ENCODE measurements at regions of chr2 and their contacts with region 1.

Region 1: DNA sequence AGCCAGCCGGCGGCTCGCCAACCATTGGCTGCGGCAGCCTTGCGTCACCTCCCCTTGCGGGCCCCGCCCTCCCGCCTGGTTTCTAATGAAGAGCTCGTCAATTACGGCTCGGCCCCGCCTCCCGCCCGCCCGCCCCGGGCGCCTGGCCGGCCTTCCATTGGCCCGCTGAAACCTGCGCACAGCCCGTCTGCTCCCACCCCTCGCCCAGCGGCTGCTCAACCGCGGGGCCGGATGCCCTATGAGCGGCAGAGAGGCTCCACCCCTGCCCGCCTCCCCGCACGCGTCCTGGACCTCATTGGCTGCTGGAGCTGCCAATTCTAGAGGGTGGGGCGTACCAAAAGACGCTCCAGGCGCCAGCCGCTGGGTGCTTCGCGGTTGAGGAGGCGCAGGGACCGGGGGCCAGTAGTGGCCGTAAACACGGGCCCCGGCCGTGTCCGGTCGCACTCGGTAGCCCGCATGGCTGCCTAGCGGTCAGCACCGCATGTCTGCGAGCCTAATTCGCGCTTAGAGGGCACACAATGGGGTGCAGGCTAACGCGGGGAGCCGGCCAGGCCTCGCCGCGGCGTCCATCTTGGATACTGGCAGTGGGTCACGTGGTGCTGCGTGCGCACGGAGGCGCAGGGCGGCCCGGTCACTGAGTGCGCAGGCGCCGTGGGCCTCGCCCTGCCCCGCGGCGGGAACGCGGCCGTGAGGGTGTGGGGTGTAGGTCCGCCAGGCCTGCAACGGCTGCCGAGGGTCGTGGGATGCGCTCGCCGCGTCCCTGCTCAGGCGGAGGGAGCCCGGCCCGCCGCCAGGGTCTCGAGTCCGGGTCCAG is 454 bp upstream of the HDAC4 start:
- DNase-seq: peak; percentile 99 to 100 (median 99)
- ATAC-seq: peak; percentile 86 to 88
- H3K4me3 Mint-ChIP-seq: peak overlapping the region; percentile 85 to 96 (median 92)
- H3K27ac Mint-ChIP-seq: peak overlapping the region; percentile 92 to 99 (median 98)
- H3K4me1 Mint-ChIP-seq: peaks cover 24 to 46% (median 43%) of the 10 kb centered on the region in 4 donors
- H3K27me3 Mint-ChIP-seq: peaks cover 0 to 1% (median 0%) of the 10 kb centered on the region in 5 donors

Region 2: GRCh38 chr2:239267288-239267951 is 133.9 kb before region 1 on chr2:
- POLR2A ChIA-PET with region 1: interaction called, 16 read pairs
- DNase-seq: peak; percentile 74 to 97 (median 94)
- ATAC-seq: peak; percentile 79 to 82
- H3K4me3 Mint-ChIP-seq: peak overlapping the region; percentile 77 to 95 (median 90)
- H3K27ac Mint-ChIP-seq: peak overlapping the region; percentile 88 to 99 (median 96)
- H3K4me1 Mint-ChIP-seq: peaks cover 55 to 91% (median 87%) of the 10 kb centered on the region in 4 donors
- H3K27me3 Mint-ChIP-seq: no peaks in the 10 kb centered on the region

Region 3: GRCh38 chr2:239288951-239289511 is 112.2 kb before region 1 on chr2:
- POLR2A ChIA-PET with region 1: interaction called, 17 read pairs
- DNase-seq: peak in 7 of 10 donors; percentile 34 to 88 (median 52)
- ATAC-seq: peak; percentile 73 to 75
- H3K4me3 Mint-ChIP-seq: peak overlapping the region; percentile 64 to 87 (median 82)
- H3K27ac Mint-ChIP-seq: peak overlapping the region; percentile 91 to 100 (median 98)
- H3K4me1 Mint-ChIP-seq: peaks cover 42 to 90% (median 79%) of the 10 kb centered on the region in 4 donors
- H3K27me3 Mint-ChIP-seq: no peaks in the 10 kb centered on the region

Region 4: DNA sequence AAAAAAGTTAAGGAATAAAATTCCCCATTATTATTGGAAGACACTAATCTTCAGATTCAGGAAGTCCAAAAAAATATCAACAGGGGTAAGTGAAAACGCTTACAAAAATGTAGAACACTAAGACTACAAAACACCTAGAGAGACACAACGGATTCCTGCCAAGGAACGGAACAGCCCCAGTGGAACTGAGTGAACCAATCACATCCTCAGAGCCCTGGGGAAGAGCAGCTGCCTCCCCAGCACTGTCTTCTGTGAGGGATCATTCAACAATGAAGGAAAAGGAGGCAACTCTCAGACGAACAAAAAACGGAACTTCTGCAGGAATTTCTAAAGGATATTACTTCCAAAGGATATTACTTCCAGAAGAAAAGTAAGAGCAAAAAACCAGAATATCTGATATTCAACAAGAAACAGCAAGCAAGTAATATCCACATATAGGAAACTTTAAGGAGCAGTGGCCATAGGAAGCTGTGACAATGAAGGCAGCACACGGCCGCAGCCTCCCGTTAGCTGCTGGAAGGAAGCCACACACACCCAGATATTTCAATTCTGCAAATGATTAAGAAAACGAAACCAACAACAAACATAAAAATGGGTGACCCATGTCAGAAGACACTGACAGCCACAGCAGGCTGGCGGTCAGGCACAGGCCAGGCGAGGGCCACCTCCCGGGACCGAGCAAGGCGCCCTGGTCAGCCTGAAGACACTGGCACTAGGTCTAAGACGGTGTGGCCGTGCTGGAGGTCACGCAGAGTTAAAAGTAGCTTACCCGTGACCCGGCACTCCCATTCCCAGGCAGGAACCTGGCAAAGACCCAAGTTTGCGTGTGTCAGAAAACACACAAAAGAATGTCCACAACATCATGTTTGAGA is 82.2 kb before region 1 on chr2:
- POLR2A ChIA-PET with region 1: interaction called, 28 read pairs
- DNase-seq: peak in 1 of 10 donors; percentile 55
- ATAC-seq: no peak
- H3K4me3 Mint-ChIP-seq: peak overlapping the region; percentile 69 to 97 (median 87)
- H3K27ac Mint-ChIP-seq: peak overlapping the region; percentile 92 to 99 (median 97)
- H3K4me1 Mint-ChIP-seq: peaks cover 25 to 80% (median 64%) of the 10 kb centered on the region in 4 donors
- H3K27me3 Mint-ChIP-seq: no peaks in the 10 kb centered on the region

Region 5: DNA sequence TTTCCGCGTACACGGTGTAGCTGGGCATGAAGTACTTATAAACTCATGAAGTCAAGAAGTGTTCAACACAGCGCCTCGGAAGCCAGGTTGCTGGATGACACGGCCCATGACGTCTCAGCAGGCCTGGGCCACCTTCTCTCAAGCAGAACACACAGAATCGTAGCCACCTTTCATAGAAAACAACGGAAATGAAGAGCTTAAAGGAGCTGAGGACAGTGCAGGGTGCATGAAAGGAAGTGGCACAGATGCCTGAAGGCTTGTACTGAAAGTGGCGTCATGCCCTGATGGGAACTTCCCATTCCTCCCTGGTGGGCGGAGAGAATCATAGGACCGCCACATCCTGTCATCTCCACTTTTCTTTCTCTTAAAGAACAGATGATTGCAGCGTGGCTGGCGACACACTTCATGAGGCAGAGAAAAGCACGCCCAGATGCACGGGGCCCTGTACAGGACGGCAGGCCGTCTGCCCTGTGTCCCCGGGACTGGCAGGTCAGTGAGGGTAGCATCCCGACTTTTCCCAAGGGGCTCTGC is 31.6 kb before region 1 on chr2:
- POLR2A ChIA-PET with region 1: interaction called, 14 read pairs
- DNase-seq: peak; percentile 47 to 91 (median 84)
- ATAC-seq: peak; percentile 96 to 97
- H3K4me3 Mint-ChIP-seq: peak overlapping the region in 9 of 10 donors; percentile 65 to 88 (median 79)
- H3K27ac Mint-ChIP-seq: peak overlapping the region in 1 of 10 donors; percentile 97
- H3K4me1 Mint-ChIP-seq: peaks cover 7 to 23% (median 11%) of the 10 kb centered on the region in 4 donors
- H3K27me3 Mint-ChIP-seq: no peaks in the 10 kb centered on the region

Region 6: DNA sequence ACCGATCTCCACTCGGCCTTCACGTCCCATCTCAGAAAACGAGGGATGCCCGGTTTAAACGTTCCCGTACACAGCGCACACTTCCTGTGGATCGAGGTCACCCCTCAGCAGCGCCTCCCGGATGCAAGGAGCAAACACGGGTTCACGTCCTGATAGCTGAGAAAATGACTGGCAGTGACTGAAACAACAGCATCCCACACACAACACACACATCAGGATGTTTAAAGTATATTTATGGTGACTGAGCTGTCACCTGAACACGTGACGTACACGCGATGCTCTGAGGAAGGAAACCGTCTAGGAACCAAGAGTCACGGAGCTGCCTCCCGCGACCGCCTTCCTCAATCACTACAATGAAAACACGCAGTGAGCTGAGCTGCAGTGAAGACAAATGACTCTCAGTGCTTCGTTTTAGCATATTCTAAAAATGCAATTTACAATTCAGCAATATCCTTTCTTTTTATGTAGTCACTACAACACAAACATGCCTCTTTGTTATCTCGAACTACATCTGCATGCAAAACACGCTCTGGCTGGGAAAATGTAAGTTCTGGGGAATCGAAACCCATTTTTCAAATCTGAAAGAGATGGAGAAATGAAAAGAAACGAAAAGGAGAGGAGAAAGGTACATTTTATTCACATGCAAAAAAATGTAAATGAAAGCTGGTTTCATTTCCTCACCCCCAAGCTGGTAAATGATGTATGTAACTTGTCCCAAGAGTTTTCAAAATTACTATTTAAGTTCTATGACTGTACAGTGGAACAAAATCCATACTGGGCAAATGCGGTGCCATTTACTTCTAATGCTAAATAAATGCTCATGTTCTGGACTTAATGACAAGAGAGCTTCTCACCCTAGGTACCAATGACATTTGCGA is 20.2 kb before region 1 on chr2:
- POLR2A ChIA-PET with region 1: interaction called, 12 read pairs
- DNase-seq: peak; percentile 39 to 81 (median 68)
- ATAC-seq: peak; percentile 94 to 97
- H3K4me3 Mint-ChIP-seq: peak overlapping the region; percentile 80 to 95 (median 88)
- H3K27ac Mint-ChIP-seq: peak overlapping the region; percentile 89 to 98 (median 96)
- H3K4me1 Mint-ChIP-seq: peaks cover 25 to 41% (median 35%) of the 10 kb centered on the region in 4 donors
- H3K27me3 Mint-ChIP-seq: no peaks in the 10 kb centered on the region

Region 7: GRCh38 chr2:239533569-239534316 is 132.5 kb after region 1 on chr2:
- POLR2A ChIA-PET with region 1: no interaction called
- DNase-seq: peak in 1 of 10 donors; percentile 26
- ATAC-seq: no peak
- H3K4me3 Mint-ChIP-seq: no peak overlapping the region
- H3K27ac Mint-ChIP-seq: no peak overlapping the region
- H3K4me1 Mint-ChIP-seq: peaks cover 0 to 6% (median under 1%) of the 10 kb centered on the region in 4 donors
- H3K27me3 Mint-ChIP-seq: peaks cover 0 to 18% (median 5%) of the 10 kb centered on the region in 5 donors

Region 8: DNA sequence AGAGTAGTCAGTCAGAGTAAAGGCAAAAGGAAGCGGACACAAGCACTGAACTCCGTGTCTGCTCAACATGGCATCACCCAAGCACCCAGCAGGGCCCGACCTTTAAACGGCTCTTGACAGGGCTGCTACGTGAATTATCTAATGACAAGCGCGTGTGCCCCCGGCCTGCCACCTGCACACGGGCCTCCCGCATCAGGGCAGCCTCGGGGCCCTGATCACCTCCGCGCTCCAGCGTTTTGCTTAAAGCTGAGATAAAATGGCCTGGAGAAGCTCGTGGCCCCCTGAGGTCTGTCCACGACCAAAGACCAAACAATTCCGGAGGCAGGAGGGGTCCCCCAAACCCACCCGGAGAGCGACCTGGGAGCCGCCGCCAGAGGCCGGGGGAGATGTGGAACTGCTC is 623.5 kb after region 1 on chr2:
- POLR2A ChIA-PET with region 1: interaction called, 11 read pairs
- DNase-seq: peak in 4 of 10 donors; percentile 8 to 31 (median 14)
- ATAC-seq: peak; percentile 25 to 48
- H3K4me3 Mint-ChIP-seq: peak overlapping the region; percentile 90 to 96 (median 92)
- H3K27ac Mint-ChIP-seq: peak overlapping the region; percentile 90 to 98 (median 95)
- H3K4me1 Mint-ChIP-seq: peaks cover 12 to 26% (median 24%) of the 10 kb centered on the region in 4 donors
- H3K27me3 Mint-ChIP-seq: peaks cover 4 to 8% (median 6%) of the 10 kb centered on the region in 5 donors